HEK293 (cell line): ENCODE measurements at regions of chr9 and their contacts with region 1.

Region 1: GRCh38 chr9:38417003-38417945 is 7.0 kb downstream of the IGFBPL1 start:
- H3K4me3 ChIP-seq: no peak overlapping the region
- H3K27ac ChIP-seq: no peak overlapping the region
- H3K4me1 ChIP-seq: no peaks in the 10 kb centered on the region
- CTCF ChIP-seq: no peak

Region 2: DNA sequence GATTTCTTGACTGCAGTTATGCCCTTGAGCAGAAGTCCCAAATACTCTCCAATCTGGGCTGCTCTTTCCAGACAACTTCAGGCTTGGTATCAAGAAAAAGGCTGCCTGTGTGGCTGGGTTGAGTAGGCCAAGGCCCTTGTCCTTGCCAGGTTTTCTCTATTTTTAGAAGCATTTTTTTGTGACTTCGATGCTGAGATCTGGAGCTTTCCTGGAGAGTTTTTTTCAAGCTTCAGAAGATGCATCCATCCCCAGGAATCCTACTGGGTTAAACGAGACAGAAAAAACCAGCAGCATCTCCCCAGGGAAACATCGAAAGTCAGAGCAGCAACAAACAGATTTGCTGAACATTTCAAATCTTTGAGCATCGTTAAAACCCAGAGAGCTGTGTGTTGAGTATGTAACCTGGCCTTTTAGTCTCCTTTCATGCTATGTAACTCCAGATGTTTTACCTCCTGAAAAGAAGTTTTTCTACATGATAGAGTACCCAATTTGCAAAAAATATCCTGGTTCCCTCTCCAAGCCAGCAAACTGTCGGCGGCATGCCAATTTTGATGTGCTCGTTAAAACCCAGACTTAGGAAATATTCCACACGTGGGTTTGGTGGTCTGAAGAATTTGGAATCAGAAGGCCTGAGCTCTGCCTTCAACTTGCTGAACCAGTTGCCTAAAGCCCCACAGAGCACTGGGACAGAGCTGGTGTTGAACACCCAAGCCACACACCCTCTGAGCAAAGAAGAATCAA is 122.9 kb before region 1 on chr9:
- CTCF ChIA-PET with region 1: no interaction called
- POLR2A ChIA-PET with region 1: no interaction called
- H3K4me3 ChIP-seq: no peak overlapping the region
- H3K27ac ChIP-seq: no peak overlapping the region
- H3K4me1 ChIP-seq: no peaks in the 10 kb centered on the region
- CTCF ChIP-seq: no peak

Region 3: DNA sequence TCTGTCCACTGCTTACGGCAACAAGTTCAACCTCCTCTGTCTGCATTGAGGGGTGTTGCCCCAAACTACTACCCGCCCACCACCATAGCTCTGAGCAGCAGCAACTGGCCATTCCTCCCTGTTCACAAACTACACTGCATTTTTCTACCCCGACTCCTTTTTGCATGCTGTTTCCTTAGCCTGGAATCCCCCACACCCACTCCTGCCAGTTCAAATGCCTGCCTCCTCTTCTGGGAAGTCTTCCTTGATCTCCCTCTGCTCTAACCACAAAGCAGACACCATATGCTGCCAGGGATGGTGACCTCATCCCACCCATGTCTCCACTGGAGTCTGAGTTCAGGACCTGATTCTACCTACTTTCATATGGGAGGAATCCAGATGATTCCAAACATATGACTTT is 11.5 kb before region 1 on chr9:
- CTCF ChIA-PET with region 1: interaction called, 11 read pairs
- POLR2A ChIA-PET with region 1: no interaction called
- H3K4me3 ChIP-seq: no peak overlapping the region
- H3K27ac ChIP-seq: no peak overlapping the region
- H3K4me1 ChIP-seq: no peaks in the 10 kb centered on the region
- CTCF ChIP-seq: no peak

Region 4: DNA sequence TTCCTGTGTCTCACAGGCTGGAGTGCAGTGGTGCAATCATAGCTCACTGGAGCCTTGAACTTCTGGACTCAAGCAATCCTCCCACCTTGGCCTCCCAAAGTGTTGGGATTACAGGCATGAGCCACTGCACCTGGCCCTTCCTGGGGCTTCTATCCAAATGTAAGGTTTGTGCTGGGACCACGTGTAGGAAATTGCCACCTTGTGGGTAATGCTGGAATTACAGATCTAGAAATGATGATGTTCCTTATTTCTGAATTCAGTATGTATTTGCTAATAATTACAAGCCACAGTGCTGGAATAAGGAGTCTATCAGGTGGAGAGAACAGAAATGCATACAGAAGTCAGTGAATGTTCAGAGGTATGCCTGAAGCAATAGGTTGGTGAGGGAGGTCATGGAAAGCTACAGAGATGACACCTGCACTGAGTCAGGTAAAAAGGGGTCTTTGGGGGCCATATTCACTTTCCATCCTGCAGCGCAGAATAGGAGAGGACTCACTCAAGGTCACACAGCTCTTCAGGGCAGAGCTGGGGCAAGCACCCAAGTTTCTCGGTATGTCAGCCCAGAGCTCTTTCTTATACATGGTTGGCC is 15.7 kb after region 1 on chr9:
- CTCF ChIA-PET with region 1: interaction called, 58 read pairs
- POLR2A ChIA-PET with region 1: no interaction called
- H3K4me3 ChIP-seq: no peak overlapping the region
- H3K27ac ChIP-seq: no peak overlapping the region
- H3K4me1 ChIP-seq: no peaks in the 10 kb centered on the region
- CTCF ChIP-seq: no peak

Region 5: DNA sequence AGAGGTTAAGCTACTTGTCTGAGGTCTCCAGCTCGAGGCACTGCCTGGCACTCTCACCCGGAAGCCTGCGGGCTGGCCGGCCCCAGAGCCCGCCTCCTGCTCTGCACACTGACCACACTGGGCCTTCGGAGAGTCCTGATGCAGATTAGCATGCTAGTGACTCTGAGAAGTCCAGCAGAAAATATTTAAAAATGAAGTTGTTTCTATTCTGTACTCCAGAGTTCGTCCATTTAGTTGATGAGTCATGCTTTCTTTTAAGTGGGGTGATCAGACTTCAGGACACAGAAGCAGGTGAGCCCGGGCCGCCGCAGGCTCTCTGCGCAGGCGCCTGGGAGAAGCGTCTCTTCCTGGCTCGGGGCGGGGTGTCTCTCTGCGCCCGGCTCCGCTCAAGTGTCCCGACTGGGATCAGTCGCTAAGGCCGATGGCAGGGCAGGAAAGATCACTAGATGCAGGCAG is 270.1 kb after region 1 on chr9:
- CTCF ChIA-PET with region 1: no interaction called
- POLR2A ChIA-PET with region 1: no interaction called
- H3K4me3 ChIP-seq: no peak overlapping the region
- H3K27ac ChIP-seq: no peak overlapping the region
- H3K4me1 ChIP-seq: peaks cover 7% of the 10 kb centered on the region
- CTCF ChIP-seq: no peak